ENCODE measurements at regions of chr1 and their contacts with region 1.

Region 1: GRCh38 chr1:96843196-96843595 is 121.6 kb downstream of the PTBP2 start:
- DNase-seq: no peak
- ATAC-seq: no peak
- H3K4me3 ChIP-seq: no peak overlapping the region
- H3K4me3 Mint-ChIP-seq: no peak overlapping the region
- H3K27ac ChIP-seq: no peak overlapping the region
- H3K27ac Mint-ChIP-seq: no peak overlapping the region
- H3K4me1 ChIP-seq: no peaks in the 10 kb centered on the region
- H3K4me1 Mint-ChIP-seq: no peaks in the 10 kb centered on the region
- H3K27me3 ChIP-seq: no peaks in the 10 kb centered on the region
- H3K27me3 Mint-ChIP-seq: peaks cover 0 to 4% of the 10 kb centered on the region in 2 donors

Region 2: GRCh38 chr1:96588416-96588995 is 254.7 kb before region 1 on chr1:
- CTCF ChIA-PET with region 1: interaction called in 1 of 2 experiments, 14 read pairs
- POLR2A ChIA-PET with region 1: no interaction called
- DNase-seq: no peak
- ATAC-seq: no peak
- H3K4me3 ChIP-seq: no peak overlapping the region
- H3K4me3 Mint-ChIP-seq: no peak overlapping the region
- H3K27ac ChIP-seq: no peak overlapping the region
- H3K27ac Mint-ChIP-seq: no peak overlapping the region
- H3K4me1 ChIP-seq: no peaks in the 10 kb centered on the region
- H3K4me1 Mint-ChIP-seq: no peaks in the 10 kb centered on the region
- H3K27me3 ChIP-seq: no peaks in the 10 kb centered on the region
- H3K27me3 Mint-ChIP-seq: peaks cover 0 to 1% of the 10 kb centered on the region in 2 donors

Region 3: DNA sequence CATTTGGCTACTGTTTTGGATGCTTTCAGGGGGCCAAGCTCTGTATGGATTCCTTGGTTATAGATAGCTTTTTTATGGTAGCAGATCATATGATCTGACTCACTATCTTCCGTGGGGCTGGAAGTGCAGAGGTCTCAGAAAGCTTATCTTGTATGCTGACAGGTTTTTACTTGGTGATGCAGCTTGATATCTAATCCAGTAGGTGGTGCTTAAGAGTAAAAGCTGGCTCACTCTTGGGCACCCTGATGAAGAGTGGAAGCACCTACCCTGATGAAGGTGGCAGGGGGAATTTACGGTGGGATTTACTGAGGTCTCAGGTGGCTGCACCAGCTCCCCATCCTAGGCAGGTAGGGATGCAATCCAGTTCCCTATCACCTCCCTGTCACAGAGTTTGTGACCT is 29.6 kb after region 1 on chr1:
- CTCF ChIA-PET with region 1: no interaction called
- POLR2A ChIA-PET with region 1: no interaction called
- DNase-seq: no peak
- ATAC-seq: no peak
- H3K4me3 ChIP-seq: no peak overlapping the region
- H3K4me3 Mint-ChIP-seq: no peak overlapping the region
- H3K27ac ChIP-seq: no peak overlapping the region
- H3K27ac Mint-ChIP-seq: no peak overlapping the region
- H3K4me1 ChIP-seq: no peaks in the 10 kb centered on the region
- H3K4me1 Mint-ChIP-seq: no peaks in the 10 kb centered on the region
- H3K27me3 ChIP-seq: peaks cover 0 to 5% of the 10 kb centered on the region in 2 experiments
- H3K27me3 Mint-ChIP-seq: no peaks in the 10 kb centered on the region

Region 4: GRCh38 chr1:96979304-96980268 is 136.4 kb after region 1 on chr1:
- CTCF ChIA-PET with region 1: no interaction called
- POLR2A ChIA-PET with region 1: no interaction called
- DNase-seq: no peak
- ATAC-seq: no peak
- H3K4me3 ChIP-seq: no peak overlapping the region
- H3K4me3 Mint-ChIP-seq: no peak overlapping the region
- H3K27ac ChIP-seq: no peak overlapping the region
- H3K27ac Mint-ChIP-seq: no peak overlapping the region
- H3K4me1 ChIP-seq: no peaks in the 10 kb centered on the region
- H3K4me1 Mint-ChIP-seq: no peaks in the 10 kb centered on the region
- H3K27me3 ChIP-seq: no peaks in the 10 kb centered on the region
- H3K27me3 Mint-ChIP-seq: peaks cover 6 to 13% of the 10 kb centered on the region in 2 donors